H1 (cell line): ENCODE measurements at regions of chr18 and their contacts with region 1.

Region 1: DNA sequence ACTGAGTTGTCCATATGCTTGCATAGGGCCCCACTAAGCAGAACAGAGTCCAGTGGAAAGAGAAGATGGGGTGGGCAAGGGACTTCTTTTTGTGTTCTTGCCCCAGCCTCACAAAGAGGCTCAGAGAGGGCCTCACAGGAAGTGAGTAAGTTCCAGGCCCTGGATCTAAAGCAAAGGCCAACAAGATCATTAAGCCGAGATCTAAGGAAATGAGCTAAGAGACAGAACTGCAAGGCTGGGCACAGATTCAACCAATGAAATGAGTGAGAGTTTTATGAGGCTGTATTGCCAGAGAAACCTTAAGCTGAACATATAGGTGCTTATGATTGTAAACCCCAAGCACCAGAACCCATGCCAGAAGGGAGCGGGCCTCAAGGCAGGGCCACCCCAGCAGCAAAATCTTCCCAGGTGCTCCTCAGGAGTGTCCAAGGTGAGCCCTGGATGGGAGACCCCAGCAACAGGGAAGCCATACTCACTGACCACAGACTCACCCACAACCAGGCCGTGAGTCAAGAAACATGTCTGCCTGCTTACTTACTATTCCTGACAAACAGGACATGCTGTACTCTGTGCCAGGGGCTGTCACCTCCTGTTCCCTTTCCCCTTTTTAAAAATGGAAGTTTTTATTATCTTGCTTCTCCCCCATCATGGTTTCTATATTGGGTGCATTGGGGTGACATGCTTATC is 40.2 kb downstream of the SLC14A1 start:
- DNase-seq: no peak
- H3K4me3 ChIP-seq: no peak overlapping the region
- H3K27ac ChIP-seq: no peak overlapping the region
- H3K4me1 ChIP-seq: peaks cover 0 to 18% (median 12%) of the 10 kb centered on the region in 4 experiments; a peak in 6 of 7 replicates
- H3K27me3 ChIP-seq: no peaks in the 10 kb centered on the region
- CTCF ChIP-seq: no peak
- EP300 ChIP-seq: no peak
- POLR2A ChIP-seq: no peak
- RAD21 ChIP-seq: no peak

Region 2: DNA sequence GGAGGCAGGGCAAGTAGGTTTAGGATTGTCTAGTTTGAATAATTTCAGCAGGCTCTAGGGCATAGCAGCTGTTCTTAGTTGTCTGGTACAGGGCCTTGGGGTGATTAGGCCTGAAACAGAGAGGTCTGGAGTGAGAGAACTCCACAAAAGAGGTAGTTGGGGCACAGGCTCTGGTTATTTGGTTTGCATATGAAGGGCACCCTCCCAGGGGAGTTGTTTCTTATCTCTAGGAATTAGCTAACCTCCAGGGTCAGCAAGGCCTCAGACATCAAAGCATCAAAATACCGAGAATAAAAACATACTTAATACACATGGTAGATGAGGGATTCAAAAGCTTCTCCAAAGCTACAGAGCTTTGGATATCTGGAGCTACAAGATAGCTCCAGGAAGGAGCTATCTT is 187.2 kb before region 1 on chr18:
- CTCF ChIA-PET with region 1: no interaction called
- POLR2A ChIA-PET with region 1: no interaction called
- DNase-seq: no peak
- H3K4me3 ChIP-seq: no peak overlapping the region
- H3K27ac ChIP-seq: no peak overlapping the region
- H3K4me1 ChIP-seq: peaks cover 0 to 4% (median 2%) of the 10 kb centered on the region in 4 experiments; a peak in 5 of 7 replicates
- H3K27me3 ChIP-seq: no peaks in the 10 kb centered on the region; a peak in 2 of 7 replicates
- CTCF ChIP-seq: no peak
- EP300 ChIP-seq: no peak
- POLR2A ChIP-seq: no peak
- RAD21 ChIP-seq: no peak

Region 3: DNA sequence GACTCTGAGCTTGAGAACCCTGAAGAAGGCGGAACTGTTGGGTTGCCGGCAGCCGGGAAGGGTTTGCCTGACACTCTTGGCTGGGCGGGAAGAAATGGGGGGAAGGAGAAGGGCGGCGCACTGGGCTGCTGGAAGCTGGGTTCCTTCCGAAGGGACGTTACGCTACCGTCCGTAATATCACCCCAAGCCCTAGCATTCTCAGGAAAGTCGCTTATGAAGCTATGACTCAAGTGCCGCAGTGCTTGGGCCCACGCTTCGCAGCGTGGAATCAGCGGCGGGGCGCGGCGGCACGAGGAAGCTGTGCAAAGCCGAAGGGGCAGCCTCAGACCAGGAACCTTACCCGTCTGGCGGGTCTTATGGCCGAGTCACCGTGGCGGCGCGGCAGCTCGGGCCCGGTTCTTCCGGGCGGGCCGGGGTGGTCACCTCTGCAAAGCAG is 11.1 kb after region 1 on chr18:
- CTCF ChIA-PET with region 1: interaction called, 20 read pairs
- POLR2A ChIA-PET with region 1: interaction called, 15 read pairs
- DNase-seq: peak in 1 of 2 experiments; percentile 75
- H3K4me3 ChIP-seq: peak overlapping the region; percentile 61 to 84 (median 78)
- H3K27ac ChIP-seq: peak overlapping the region; percentile 79
- H3K4me1 ChIP-seq: peaks cover 0 to 3% (median 0%) of the 10 kb centered on the region in 4 experiments; a peak in 1 of 7 replicates
- H3K27me3 ChIP-seq: no peaks in the 10 kb centered on the region; a peak in 2 of 7 replicates
- CTCF ChIP-seq: no peak
- EP300 ChIP-seq: no peak; a peak in 1 of 3 replicates
- POLR2A ChIP-seq: peak; percentile 87 to 89
- RAD21 ChIP-seq: peak in 1 of 2 experiments; percentile 19; a peak in 1 of 4 replicates

Region 4: DNA sequence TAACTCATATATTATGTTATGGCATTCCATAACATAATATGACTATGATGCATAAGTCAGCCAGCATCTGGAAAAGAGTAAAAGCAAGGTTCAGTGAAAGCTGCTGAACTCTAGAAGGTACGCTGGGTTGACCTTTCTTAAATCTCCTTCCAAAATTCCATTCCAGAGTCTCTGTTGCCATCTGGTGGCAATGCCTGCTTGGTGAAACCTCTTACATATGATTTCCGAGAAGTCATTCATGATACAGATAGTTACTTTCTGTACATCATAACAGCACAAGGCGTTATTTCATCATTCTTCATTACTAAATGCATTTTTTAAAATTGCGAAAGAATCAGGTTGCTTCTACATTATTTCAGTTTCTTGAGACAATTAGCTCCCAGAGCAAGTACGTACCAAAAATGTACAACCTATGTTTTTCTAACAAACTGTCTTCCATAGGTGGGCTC is 210.0 kb after region 1 on chr18:
- CTCF ChIA-PET with region 1: no interaction called
- POLR2A ChIA-PET with region 1: no interaction called
- DNase-seq: no peak
- H3K4me3 ChIP-seq: no peak overlapping the region
- H3K27ac ChIP-seq: no peak overlapping the region
- H3K4me1 ChIP-seq: peaks cover 0 to 4% (median 3%) of the 10 kb centered on the region in 4 experiments; a peak in 3 of 7 replicates
- H3K27me3 ChIP-seq: peaks cover 0 to under 1% (median 0%) of the 10 kb centered on the region in 4 experiments; a peak in 1 of 7 replicates
- CTCF ChIP-seq: peak in 2 of 3 experiments; percentile 67 to 71; a peak in 3 of 4 replicates
- EP300 ChIP-seq: no peak
- POLR2A ChIP-seq: no peak
- RAD21 ChIP-seq: peak; percentile 81 to 90

Region 5: DNA sequence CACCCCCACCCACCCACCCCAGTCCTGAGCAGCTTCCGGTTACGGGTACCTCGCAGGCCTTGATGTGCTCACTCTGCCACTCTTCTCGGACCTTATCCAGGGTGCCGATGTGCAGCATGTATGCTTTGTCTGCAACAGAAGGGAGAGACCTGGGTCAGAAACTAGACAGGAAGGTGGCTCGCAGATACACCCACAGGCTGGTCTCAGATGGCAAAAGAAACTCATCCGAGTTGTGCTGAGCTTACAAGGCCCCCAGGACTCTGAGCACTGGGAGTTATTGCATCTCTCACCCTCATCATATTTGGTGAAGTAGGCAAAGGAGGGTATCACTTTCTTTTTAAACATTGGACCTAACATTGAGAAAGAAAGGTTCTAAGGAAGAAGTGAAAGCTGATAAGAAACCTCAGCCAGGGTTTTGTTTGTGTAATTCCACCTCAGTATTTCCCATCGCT is 233.6 kb after region 1 on chr18:
- CTCF ChIA-PET with region 1: no interaction called
- POLR2A ChIA-PET with region 1: no interaction called
- DNase-seq: no peak
- H3K4me3 ChIP-seq: no peak overlapping the region
- H3K27ac ChIP-seq: no peak overlapping the region
- H3K4me1 ChIP-seq: peaks cover 0 to 4% (median 0%) of the 10 kb centered on the region in 4 experiments; a peak in 1 of 7 replicates
- H3K27me3 ChIP-seq: no peaks in the 10 kb centered on the region
- CTCF ChIP-seq: no peak
- EP300 ChIP-seq: no peak
- POLR2A ChIP-seq: no peak
- RAD21 ChIP-seq: no peak